B cell (primary cell): ENCODE measurements at regions of chrX and their contacts with region 1.

Region 1: GRCh38 chrX:74536152-74536831 is 78.1 kb downstream of the RLIM start:
- DNase-seq: peak; percentile 50
- ATAC-seq: peak; percentile 70
- H3K4me3 ChIP-seq: peak overlapping the region; percentile 26 to 62 (median 54)
- H3K4me3 Mint-ChIP-seq: peak overlapping the region; percentile 86
- H3K27ac ChIP-seq: peak overlapping the region in 1 of 2 donors; percentile 51
- H3K27ac Mint-ChIP-seq: peak overlapping the region; percentile 37
- H3K4me1 ChIP-seq: peaks cover 5 to 14% of the 10 kb centered on the region in 2 donors
- H3K4me1 Mint-ChIP-seq: peaks cover 9% of the 10 kb centered on the region
- H3K27me3 ChIP-seq: no peaks in the 10 kb centered on the region
- H3K27me3 Mint-ChIP-seq: no peaks in the 10 kb centered on the region
- CTCF ChIP-seq: no peak

Region 2: DNA sequence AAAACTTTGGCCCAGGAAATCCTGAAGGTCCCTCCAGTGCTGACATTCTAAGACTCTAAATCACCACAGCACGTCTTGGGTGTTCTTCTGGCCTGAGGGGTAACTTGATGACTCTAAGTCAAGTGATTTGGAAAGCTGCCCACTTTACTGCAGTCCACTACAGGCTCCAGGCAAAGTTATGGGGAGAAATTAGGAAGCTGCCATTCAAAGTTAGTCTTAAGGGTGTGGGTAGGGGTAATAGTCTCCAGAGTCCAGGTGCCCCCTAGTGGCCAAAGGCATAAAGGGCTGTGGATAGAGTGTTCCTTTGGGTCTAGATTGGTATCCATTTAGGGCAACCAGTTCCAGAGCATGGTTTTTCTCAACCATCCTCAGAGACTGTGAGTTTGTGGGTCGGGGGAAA is 153.7 kb before region 1 on chrX:
- CTCF ChIA-PET with region 1: interaction called, 12 read pairs
- POLR2A ChIA-PET with region 1: no interaction called
- intact Hi-C with region 1: no loop called
- DNase-seq: peak; percentile 48
- ATAC-seq: peak; percentile 58
- H3K4me3 ChIP-seq: no peak overlapping the region
- H3K4me3 Mint-ChIP-seq: no peak overlapping the region
- H3K27ac ChIP-seq: no peak overlapping the region
- H3K27ac Mint-ChIP-seq: no peak overlapping the region
- H3K4me1 ChIP-seq: no peaks in the 10 kb centered on the region
- H3K4me1 Mint-ChIP-seq: no peaks in the 10 kb centered on the region
- H3K27me3 ChIP-seq: peaks cover 0 to 2% (median 0%) of the 10 kb centered on the region in 4 experiments
- H3K27me3 Mint-ChIP-seq: peaks cover 3% of the 10 kb centered on the region
- CTCF ChIP-seq: peak; percentile 72

Region 3: DNA sequence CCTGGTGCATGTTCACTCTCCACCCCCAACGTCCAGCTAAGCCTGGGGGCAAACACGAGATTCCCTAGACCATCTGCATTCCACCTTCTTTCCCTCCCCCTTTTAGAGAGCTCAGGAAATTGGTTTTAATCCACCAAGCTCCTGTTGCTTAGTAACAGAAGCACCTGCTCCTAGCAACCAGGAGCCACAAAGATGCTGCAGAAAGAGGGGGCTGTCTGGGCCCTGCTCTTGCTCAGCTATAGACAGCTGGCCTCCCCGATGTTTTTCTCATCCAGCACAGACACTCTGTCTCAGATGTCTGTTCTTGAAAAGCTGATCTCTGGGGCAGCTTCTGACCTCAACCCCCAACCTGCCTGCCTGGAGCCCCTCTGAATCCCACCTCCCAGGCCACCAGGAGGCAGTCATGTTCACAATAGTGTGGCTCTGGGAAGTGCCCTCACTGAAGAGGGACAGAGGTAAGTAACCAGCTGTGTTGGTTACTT is 43.5 kb before region 1 on chrX:
- CTCF ChIA-PET with region 1: interaction called, 10 read pairs
- POLR2A ChIA-PET with region 1: no interaction called
- intact Hi-C with region 1: no loop called
- DNase-seq: peak; percentile 19
- ATAC-seq: peak; percentile 24
- H3K4me3 ChIP-seq: no peak overlapping the region
- H3K4me3 Mint-ChIP-seq: no peak overlapping the region
- H3K27ac ChIP-seq: no peak overlapping the region
- H3K27ac Mint-ChIP-seq: no peak overlapping the region
- H3K4me1 ChIP-seq: no peaks in the 10 kb centered on the region
- H3K4me1 Mint-ChIP-seq: no peaks in the 10 kb centered on the region
- H3K27me3 ChIP-seq: no peaks in the 10 kb centered on the region
- H3K27me3 Mint-ChIP-seq: no peaks in the 10 kb centered on the region
- CTCF ChIP-seq: no peak